Transverse colon (tissue), 4 donors: ENCODE measurements at regions of chr3 and their contacts with region 1.

Region 1: DNA sequence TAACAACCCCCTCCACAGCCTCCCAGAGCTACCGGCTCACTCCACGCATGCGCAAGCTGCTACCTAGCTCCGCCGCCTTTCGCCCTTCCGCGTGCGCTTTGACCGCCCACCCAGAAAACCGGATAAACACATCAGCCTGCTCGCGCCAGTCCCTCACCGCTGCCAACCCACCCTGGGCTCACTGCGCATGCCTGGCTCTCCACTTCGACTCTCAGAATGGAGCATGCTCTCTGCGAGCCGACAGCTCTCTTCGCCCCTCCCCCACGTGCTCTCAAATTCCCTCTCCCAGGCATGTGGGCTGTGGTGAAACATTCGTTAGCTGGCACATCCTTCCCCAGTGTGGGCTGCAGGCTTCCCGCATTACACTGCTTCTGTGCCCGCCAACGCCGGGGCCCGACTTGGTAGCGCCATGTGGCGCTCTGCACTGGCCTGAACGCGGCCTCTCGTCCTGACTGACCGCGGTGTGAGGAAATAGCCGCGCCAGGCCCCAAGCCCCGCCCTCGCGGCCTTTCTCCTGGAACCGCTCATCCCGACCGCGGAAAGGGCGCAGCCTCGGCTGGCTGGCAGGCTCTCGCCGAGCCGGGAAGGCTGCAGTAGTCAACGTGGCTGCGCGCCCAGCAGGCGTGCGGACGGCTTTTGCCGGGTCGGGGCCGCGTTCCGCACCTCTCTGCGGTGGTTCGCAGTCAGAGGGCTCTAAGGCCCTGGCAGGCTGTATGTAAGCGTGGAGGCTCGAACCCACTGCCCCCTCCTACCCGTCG is 445 bp upstream of the MSL2 start:
- DNase-seq: peak; percentile 99
- H3K4me3 ChIP-seq: peak overlapping the region; percentile 72 to 96 (median 86)
- H3K27ac ChIP-seq: peak overlapping the region; percentile 99 to 100 (median 100)
- H3K4me1 ChIP-seq: peaks cover 11 to 35% (median 30%) of the 10 kb centered on the region in 4 donors
- H3K27me3 ChIP-seq: no peaks in the 10 kb centered on the region
- CTCF ChIP-seq: peak in 1 of 5 experiments; percentile 21
- EP300 ChIP-seq: no peak
- POLR2A ChIP-seq: peak; percentile 78

Region 2: DNA sequence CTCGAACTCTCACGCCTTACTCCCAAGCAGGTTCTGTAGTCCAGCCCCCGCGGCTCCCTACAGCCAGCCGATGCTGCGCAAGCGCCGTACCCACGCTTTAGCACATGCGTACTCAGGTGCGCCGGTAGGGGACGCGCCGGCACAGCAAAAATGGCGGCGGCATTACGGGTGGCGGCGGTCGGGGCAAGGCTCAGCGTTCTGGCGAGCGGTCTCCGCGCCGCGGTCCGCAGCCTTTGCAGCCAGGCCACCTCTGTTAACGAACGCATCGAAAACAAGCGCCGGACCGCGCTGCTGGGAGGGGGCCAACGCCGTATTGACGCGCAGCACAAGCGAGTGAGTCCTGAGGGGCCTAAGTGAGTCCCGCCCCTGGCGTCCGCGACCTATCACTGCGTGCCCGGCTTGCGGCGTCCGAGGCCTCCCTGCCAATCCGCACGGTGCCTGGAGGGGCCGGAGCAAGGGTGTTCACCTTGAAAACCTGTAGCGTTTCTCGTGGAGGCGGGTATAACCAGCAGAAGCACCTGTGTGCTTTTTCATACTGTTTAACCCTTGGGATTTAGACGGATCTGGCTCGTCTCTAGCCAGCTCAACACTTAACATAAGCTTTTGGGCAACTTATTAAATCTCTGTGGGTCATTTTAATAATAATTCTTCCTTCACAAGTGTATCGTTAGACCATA is 53.8 kb after region 1 on chr3 and contains the start of gene PCCB:
- in situ Hi-C with region 1: no loop called
- intact Hi-C with region 1: loop called (anchors 10 kb)
- DNase-seq: peak; percentile 96
- H3K4me3 ChIP-seq: peak within 1 kb of the TSS; percentile 41 to 66 (median 56)
- H3K27ac ChIP-seq: peak within 1 kb of the TSS; percentile 87 to 95 (median 92)
- H3K4me1 ChIP-seq: peaks cover 7 to 21% (median 14%) of the 10 kb centered on the region in 4 donors
- H3K27me3 ChIP-seq: no peaks in the 10 kb centered on the region
- CTCF ChIP-seq: peak; percentile 80 to 100 (median 90)
- EP300 ChIP-seq: no peak
- POLR2A ChIP-seq: peak; percentile 73
- total RNA-seq, gene PCCB: 5.2 to 63.1 (median 48.0) TPM